Caco-2 (cell line): ENCODE measurements at regions of chr12 and their contacts with region 1.

Region 1: GRCh38 chr12:131896080-131896810 is 1.8 kb downstream of the ULK1 start:
- DNase-seq: peak; percentile 91 to 92
- H3K4me3 ChIP-seq: peak overlapping the region; percentile 75
- H3K4me3 Mint-ChIP-seq: peak overlapping the region; percentile 83
- H3K27ac Mint-ChIP-seq: peak overlapping the region; percentile 85
- H3K4me1 ChIP-seq: peaks cover 5% of the 10 kb centered on the region; the same call in 1 of the 2 replicates
- H3K4me1 Mint-ChIP-seq: peaks cover 7% of the 10 kb centered on the region
- H3K27me3 ChIP-seq: no peaks in the 10 kb centered on the region
- H3K27me3 Mint-ChIP-seq: no peaks in the 10 kb centered on the region
- CTCF ChIP-seq: no peak

Region 2: DNA sequence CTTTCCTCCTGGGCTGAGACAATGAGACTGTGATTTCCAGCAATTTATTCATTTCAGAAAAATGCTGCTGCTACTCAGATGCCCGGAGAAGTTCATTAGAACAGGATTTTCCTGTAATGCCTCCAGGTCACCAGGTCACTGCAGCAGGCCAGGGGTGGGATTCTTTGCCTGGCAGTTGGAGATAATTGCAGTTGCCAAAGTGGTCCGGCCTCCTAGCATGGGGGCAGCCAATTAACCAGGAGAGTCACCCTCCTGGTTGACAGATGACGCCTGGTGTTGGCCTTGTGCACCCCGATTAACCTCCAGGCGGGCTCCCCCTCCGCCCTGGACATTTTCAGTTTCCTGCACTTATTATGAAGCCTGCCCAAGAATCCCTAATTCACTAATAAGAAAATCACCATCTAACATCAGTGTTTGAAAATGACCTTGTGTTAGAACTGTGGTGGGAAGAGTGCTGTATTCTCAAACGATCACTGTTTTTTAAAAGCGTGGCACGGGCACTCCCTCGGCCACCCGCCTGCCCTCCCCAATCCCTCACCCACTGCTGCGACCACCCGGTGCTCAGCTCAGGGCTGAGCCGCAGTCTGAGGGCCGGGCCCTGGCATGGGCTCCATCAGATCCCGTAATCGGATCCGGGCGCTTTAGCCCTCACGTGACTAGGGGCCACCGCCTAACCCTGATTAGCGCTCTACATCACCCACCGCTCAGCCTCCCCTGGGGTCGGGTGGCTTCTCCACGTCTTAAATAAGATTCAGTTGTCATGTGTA is 1193.1 kb before region 1 on chr12:
- CTCF ChIA-PET with region 1: no interaction called
- POLR2A ChIA-PET with region 1: no interaction called
- intact Hi-C with region 1: no loop called
- DNase-seq: no peak
- H3K4me3 ChIP-seq: no peak overlapping the region
- H3K4me3 Mint-ChIP-seq: no peak overlapping the region
- H3K27ac Mint-ChIP-seq: no peak overlapping the region
- H3K4me1 ChIP-seq: no peaks in the 10 kb centered on the region
- H3K4me1 Mint-ChIP-seq: no peaks in the 10 kb centered on the region
- H3K27me3 ChIP-seq: no peaks in the 10 kb centered on the region
- H3K27me3 Mint-ChIP-seq: peaks cover 21% of the 10 kb centered on the region
- CTCF ChIP-seq: no peak

Region 3: DNA sequence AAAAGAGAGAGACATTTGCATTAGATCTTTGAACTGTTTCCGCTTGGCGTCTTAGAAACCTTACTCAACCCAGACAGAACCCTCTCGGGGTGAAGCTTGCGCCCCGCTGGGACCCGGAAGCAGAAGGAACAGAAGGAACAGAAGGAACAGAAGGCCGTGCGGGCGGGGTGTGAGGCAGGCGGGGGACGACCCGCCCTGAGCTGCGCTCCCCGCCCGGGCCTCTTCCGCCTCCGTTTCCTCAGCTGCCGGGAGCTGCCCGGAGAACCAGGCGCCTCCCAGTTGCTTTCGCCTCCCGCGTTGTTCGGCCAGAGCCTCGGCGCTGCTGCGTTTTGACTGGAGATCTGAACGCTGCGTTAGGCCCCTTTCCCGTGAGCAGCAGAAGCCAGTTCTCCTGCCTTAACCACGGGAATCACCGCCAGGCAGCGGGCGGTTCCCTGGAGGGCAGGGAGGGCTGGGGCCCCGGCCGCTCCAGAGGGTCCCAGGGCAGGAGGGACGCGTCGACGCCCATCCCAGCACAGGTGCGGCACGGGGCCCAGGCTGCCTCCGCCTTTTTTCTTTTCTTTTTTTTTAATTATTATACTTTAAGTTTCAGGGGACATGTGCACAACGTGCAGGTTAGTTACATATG is 87.4 kb before region 1 on chr12:
- CTCF ChIA-PET with region 1: no interaction called
- POLR2A ChIA-PET with region 1: no interaction called
- intact Hi-C with region 1: no loop called
- DNase-seq: no peak
- H3K4me3 ChIP-seq: peak overlapping the region; percentile 32
- H3K4me3 Mint-ChIP-seq: peak overlapping the region; percentile 57
- H3K27ac Mint-ChIP-seq: no peak overlapping the region
- H3K4me1 ChIP-seq: no peaks in the 10 kb centered on the region
- H3K4me1 Mint-ChIP-seq: no peaks in the 10 kb centered on the region
- H3K27me3 ChIP-seq: no peaks in the 10 kb centered on the region
- H3K27me3 Mint-ChIP-seq: no peaks in the 10 kb centered on the region
- CTCF ChIP-seq: no peak

Region 4: GRCh38 chr12:131836193-131836592 is 60.1 kb before region 1 on chr12:
- CTCF ChIA-PET with region 1: no interaction called
- POLR2A ChIA-PET with region 1: no interaction called
- intact Hi-C with region 1: loop called (anchors 5 kb)
- DNase-seq: no peak
- H3K4me3 ChIP-seq: no peak overlapping the region
- H3K4me3 Mint-ChIP-seq: no peak overlapping the region
- H3K27ac Mint-ChIP-seq: no peak overlapping the region
- H3K4me1 ChIP-seq: peaks cover 19% of the 10 kb centered on the region
- H3K4me1 Mint-ChIP-seq: no peaks in the 10 kb centered on the region
- H3K27me3 ChIP-seq: no peaks in the 10 kb centered on the region
- H3K27me3 Mint-ChIP-seq: no peaks in the 10 kb centered on the region
- CTCF ChIP-seq: peak in 1 of 2 experiments; percentile 58

Region 5: GRCh38 chr12:131860562-131861291 is 35.5 kb before region 1 on chr12:
- CTCF ChIA-PET with region 1: no interaction called
- POLR2A ChIA-PET with region 1: no interaction called
- intact Hi-C with region 1: loop called (anchors 1 kb)
- DNase-seq: peak; percentile 96
- H3K4me3 ChIP-seq: peak overlapping the region; percentile 6; the same call in 1 of the 2 replicates
- H3K4me3 Mint-ChIP-seq: peak overlapping the region; percentile 68
- H3K27ac Mint-ChIP-seq: peak overlapping the region; percentile 100
- H3K4me1 ChIP-seq: peaks cover 38% of the 10 kb centered on the region
- H3K4me1 Mint-ChIP-seq: peaks cover 49% of the 10 kb centered on the region
- H3K27me3 ChIP-seq: no peaks in the 10 kb centered on the region
- H3K27me3 Mint-ChIP-seq: no peaks in the 10 kb centered on the region
- CTCF ChIP-seq: no peak